GM12878 (cell line): ENCODE measurements at regions of chrX and their contacts with region 1.

Region 1: DNA sequence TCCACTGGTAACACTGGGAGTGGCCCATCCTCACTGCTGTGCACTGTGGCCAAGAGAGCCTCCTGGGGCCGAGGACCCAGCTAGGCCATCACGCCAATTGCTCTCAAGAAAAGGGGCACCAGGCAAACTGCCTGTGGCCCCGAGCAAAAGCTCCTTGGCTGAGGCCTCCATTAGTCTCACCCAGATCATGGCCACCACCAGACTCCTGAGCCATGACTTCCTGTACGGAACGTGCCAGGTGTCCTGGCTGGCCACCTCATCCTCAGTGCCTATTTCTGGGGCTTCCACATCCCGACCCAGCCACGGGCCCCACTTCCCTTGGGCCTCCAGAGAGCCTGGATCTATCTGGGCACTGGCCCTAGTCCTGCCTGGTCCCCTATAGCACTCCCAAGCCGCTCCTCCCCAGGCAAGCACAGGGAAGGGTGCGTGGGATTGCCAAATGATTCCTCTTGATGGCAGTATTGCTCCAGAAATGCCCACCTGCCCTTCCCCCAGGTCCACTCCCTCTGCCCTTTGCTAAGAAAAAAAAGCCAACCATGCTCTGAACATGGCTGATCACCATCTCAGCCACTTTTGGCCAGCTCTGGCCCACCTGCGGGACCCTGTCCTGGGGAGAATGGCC is 212.6 kb upstream of the AGTR2 start:
- DNase-seq: no peak
- ATAC-seq: peak; percentile 56
- H3K4me3 ChIP-seq: no peak overlapping the region
- H3K27ac ChIP-seq: no peak overlapping the region
- H3K4me1 ChIP-seq: no peaks in the 10 kb centered on the region
- H3K27me3 ChIP-seq: no peaks in the 10 kb centered on the region
- CTCF ChIP-seq: peak in 2 of 3 experiments; percentile 23 to 33; a peak in 3 of 6 replicates
- EP300 ChIP-seq: no peak
- POLR2A ChIP-seq: no peak
- RAD21 ChIP-seq: peak; percentile 66

Region 2: DNA sequence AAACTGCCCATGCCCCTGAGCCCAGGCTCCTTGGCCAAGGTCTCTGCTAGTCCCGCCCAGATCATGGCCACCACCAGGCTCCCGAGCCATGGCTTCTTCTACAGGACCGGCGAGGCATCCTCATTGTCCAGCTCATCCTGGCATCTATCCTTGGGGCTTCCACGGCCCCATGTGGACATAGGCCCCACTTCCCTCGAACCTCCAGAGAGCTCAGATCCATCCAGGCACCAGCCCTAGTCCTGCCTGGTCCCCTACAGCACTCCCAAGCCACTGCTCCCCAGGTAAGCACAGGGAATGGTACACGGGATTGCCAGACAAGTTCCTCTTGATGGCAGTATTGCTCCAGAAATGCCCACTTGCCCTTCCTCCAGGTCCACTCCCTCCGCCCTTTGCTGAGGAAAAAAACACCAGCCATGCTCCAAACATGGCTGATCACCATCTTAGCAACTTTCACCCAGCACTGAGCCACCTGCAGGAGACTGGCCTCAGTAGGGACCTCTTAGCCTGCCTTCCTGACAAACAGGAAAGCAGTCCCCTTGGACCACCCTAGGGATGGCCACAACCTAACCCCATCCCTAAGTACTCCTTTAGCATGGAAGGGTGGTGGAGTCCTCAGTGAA is 59.5 kb before region 1 on chrX:
- CTCF ChIA-PET with region 1: no interaction called
- POLR2A ChIA-PET with region 1: no interaction called
- RAD21 ChIA-PET with region 1: no interaction called
- SMC1A ChIA-PET with region 1: no interaction called
- in situ Hi-C with region 1: no loop called
- intact Hi-C with region 1: no loop called
- DNase-seq: no peak
- ATAC-seq: no peak; the same call in 2 of the 3 replicates
- H3K4me3 ChIP-seq: no peak overlapping the region
- H3K27ac ChIP-seq: no peak overlapping the region
- H3K4me1 ChIP-seq: peaks cover 3% of the 10 kb centered on the region; the same call in 1 of the 2 replicates
- H3K27me3 ChIP-seq: no peaks in the 10 kb centered on the region
- CTCF ChIP-seq: peak in 2 of 3 experiments; percentile 25 to 37; a peak in 3 of 6 replicates
- EP300 ChIP-seq: no peak
- POLR2A ChIP-seq: no peak
- RAD21 ChIP-seq: peak; percentile 64

Region 3: GRCh38 chrX:115968436-115969252 is 10.7 kb after region 1 on chrX:
- CTCF ChIA-PET with region 1: interaction called, 3 read pairs
- POLR2A ChIA-PET with region 1: interaction called, 4 read pairs
- RAD21 ChIA-PET with region 1: interaction called, 4 read pairs
- SMC1A ChIA-PET with region 1: interaction called, 10 read pairs
- in situ Hi-C with region 1: no loop called
- intact Hi-C with region 1: no loop called
- DNase-seq: no peak
- ATAC-seq: peak; percentile 79
- H3K4me3 ChIP-seq: no peak overlapping the region
- H3K27ac ChIP-seq: no peak overlapping the region
- H3K4me1 ChIP-seq: no peaks in the 10 kb centered on the region
- H3K27me3 ChIP-seq: no peaks in the 10 kb centered on the region; a peak in 1 of 4 replicates
- CTCF ChIP-seq: no peak
- EP300 ChIP-seq: no peak
- POLR2A ChIP-seq: no peak
- RAD21 ChIP-seq: no peak

Region 4: DNA sequence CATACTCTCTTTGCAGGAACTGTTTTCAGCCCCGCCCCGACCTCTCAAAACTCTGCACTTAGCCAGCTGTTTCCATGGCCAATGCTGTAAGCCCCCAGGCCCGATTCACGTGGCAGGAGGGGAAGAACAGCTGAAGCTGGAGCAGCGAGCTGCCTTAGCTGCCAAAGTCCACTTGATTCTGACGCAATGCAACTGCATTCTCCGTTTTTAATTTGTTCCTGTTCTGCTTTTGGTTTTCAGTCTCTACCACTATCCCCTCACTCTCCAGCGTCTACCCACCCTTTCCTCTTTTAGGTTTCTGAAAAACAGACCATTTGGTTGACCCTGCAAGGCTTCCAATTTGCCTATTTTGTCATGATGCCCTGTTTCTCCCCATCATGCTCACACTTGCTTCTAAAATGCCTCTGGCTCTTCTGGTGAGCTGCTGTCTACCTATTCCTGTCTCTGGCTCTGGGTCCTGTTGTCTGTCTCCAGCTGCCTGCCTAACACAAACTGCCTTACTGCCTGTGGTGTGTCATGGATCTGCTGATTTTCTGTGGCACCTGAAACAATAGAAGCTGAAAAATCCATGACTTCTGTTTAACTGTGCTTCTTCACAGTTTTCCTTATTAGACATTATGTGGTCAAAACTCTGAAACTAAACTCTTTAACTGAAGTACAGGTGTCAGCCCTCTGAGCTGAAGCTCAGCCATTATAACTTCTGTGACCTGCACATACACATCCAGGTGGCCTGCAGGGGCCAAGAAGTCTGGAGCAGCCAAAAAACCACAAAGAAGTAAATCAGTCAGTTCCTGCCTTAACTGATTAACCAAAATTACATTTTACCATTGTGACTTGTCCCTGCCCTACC is 52.1 kb after region 1 on chrX:
- CTCF ChIA-PET with region 1: interaction called, 4 read pairs
- POLR2A ChIA-PET with region 1: no interaction called
- RAD21 ChIA-PET with region 1: interaction called, 11 read pairs
- SMC1A ChIA-PET with region 1: interaction called, 5 read pairs
- in situ Hi-C with region 1: no loop called
- intact Hi-C with region 1: no loop called
- DNase-seq: peak; percentile 36
- ATAC-seq: peak; percentile 89
- H3K4me3 ChIP-seq: no peak overlapping the region
- H3K27ac ChIP-seq: no peak overlapping the region
- H3K4me1 ChIP-seq: no peaks in the 10 kb centered on the region
- H3K27me3 ChIP-seq: no peaks in the 10 kb centered on the region
- CTCF ChIP-seq: no peak
- EP300 ChIP-seq: peak; percentile 85 to 95; a peak in 3 of 4 replicates
- POLR2A ChIP-seq: no peak
- RAD21 ChIP-seq: no peak